ENCODE measurements at regions of chr9 and their contacts with region 1.

Region 1: GRCh38 chr9:136539427-136540421 is 6.1 kb downstream of the NOTCH1 start:
- DNase-seq: peak; percentile 49 to 94 (median 86)
- ATAC-seq: peak; percentile 70
- H3K4me3 ChIP-seq: peak overlapping the region; percentile 30 to 58
- H3K4me3 Mint-ChIP-seq: peak overlapping the region; percentile 85
- H3K27ac ChIP-seq: peak overlapping the region; percentile 73 to 95
- H3K27ac Mint-ChIP-seq: peak overlapping the region; percentile 97
- H3K4me1 ChIP-seq: peaks cover 80% of the 10 kb centered on the region
- H3K4me1 Mint-ChIP-seq: peaks cover 59% of the 10 kb centered on the region
- H3K27me3 ChIP-seq: no peaks in the 10 kb centered on the region
- H3K27me3 Mint-ChIP-seq: no peaks in the 10 kb centered on the region
- CTCF ChIP-seq: no peak

Region 2: DNA sequence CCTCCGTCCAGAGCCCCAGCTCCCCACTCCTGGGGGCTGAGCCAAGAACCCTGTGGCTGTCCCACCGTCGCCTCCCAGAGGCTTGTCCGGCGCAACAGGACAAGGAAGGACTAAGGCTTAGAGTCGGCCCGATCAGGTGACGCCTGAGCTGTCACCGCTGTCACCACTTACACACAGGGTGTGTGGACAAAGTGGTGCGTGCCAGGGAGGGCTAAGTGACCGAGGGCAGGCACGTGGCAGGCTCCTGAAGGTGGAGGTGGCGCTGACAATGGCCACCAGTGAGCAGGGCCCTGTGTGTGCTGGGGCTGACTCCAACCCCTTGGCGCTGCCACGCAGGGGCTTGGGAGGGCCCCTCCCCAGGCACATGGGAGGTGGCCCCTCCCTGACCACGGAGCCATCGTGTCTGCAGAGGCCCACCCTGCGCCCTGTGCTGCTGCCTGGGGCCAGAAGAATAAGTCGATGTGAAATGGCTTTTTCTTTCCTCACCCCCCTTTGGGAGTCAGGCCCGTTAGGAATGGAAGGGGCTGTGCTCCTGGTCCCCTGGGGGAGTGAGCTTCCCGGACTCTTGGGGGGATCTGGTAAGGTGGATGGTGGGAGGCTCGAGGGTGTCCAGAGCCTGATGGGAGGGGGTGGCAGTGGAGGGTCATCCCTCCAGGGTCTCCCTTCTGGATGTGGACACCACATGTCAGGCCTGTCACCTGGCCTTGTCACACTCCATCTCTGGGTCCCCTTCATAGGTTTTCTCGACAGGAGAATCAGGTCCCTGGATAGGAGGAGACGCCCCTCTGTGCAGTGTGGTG is 215.0 kb before region 1 on chr9:
- CTCF ChIA-PET with region 1: no interaction called
- POLR2A ChIA-PET with region 1: no interaction called
- intact Hi-C with region 1: no loop called
- DNase-seq: no peak
- ATAC-seq: no peak
- H3K4me3 ChIP-seq: no peak overlapping the region
- H3K4me3 Mint-ChIP-seq: no peak overlapping the region
- H3K27ac ChIP-seq: no peak overlapping the region
- H3K27ac Mint-ChIP-seq: no peak overlapping the region
- H3K4me1 ChIP-seq: peaks cover 10% of the 10 kb centered on the region
- H3K4me1 Mint-ChIP-seq: peaks cover 4% of the 10 kb centered on the region
- H3K27me3 ChIP-seq: no peaks in the 10 kb centered on the region
- H3K27me3 Mint-ChIP-seq: no peaks in the 10 kb centered on the region
- CTCF ChIP-seq: no peak

Region 3: GRCh38 chr9:136370037-136370436 is 169.7 kb before region 1 on chr9:
- CTCF ChIA-PET with region 1: no interaction called
- POLR2A ChIA-PET with region 1: no interaction called
- intact Hi-C with region 1: no loop called
- DNase-seq: no peak
- ATAC-seq: no peak
- H3K4me3 ChIP-seq: no peak overlapping the region
- H3K4me3 Mint-ChIP-seq: no peak overlapping the region
- H3K27ac ChIP-seq: no peak overlapping the region
- H3K27ac Mint-ChIP-seq: no peak overlapping the region
- H3K4me1 ChIP-seq: no peaks in the 10 kb centered on the region
- H3K4me1 Mint-ChIP-seq: peaks cover 12% of the 10 kb centered on the region
- H3K27me3 ChIP-seq: peaks cover 0 to 3% of the 10 kb centered on the region in 2 experiments
- H3K27me3 Mint-ChIP-seq: no peaks in the 10 kb centered on the region
- CTCF ChIP-seq: no peak

Region 4: GRCh38 chr9:136527721-136528691 is 11.7 kb before region 1 on chr9:
- CTCF ChIA-PET with region 1: interaction called, 4 read pairs
- POLR2A ChIA-PET with region 1: interaction called, 13 read pairs
- intact Hi-C with region 1: no loop called
- DNase-seq: peak in 2 of 9 experiments; percentile 40 to 46
- ATAC-seq: no peak
- H3K4me3 ChIP-seq: no peak overlapping the region
- H3K4me3 Mint-ChIP-seq: no peak overlapping the region
- H3K27ac ChIP-seq: no peak overlapping the region
- H3K27ac Mint-ChIP-seq: peak overlapping the region; percentile 32
- H3K4me1 ChIP-seq: peaks cover 47% of the 10 kb centered on the region
- H3K4me1 Mint-ChIP-seq: peaks cover 23% of the 10 kb centered on the region
- H3K27me3 ChIP-seq: no peaks in the 10 kb centered on the region
- H3K27me3 Mint-ChIP-seq: no peaks in the 10 kb centered on the region
- CTCF ChIP-seq: no peak

Region 5: GRCh38 chr9:136578915-136579649 is 39.4 kb after region 1 on chr9:
- CTCF ChIA-PET with region 1: no interaction called
- POLR2A ChIA-PET with region 1: no interaction called
- intact Hi-C with region 1: no loop called
- DNase-seq: peak in 2 of 9 experiments; percentile 22 to 31
- ATAC-seq: peak; percentile 55
- H3K4me3 ChIP-seq: no peak overlapping the region
- H3K4me3 Mint-ChIP-seq: no peak overlapping the region
- H3K27ac ChIP-seq: no peak overlapping the region
- H3K27ac Mint-ChIP-seq: no peak overlapping the region
- H3K4me1 ChIP-seq: no peaks in the 10 kb centered on the region
- H3K4me1 Mint-ChIP-seq: peaks cover 7% of the 10 kb centered on the region
- H3K27me3 ChIP-seq: no peaks in the 10 kb centered on the region
- H3K27me3 Mint-ChIP-seq: no peaks in the 10 kb centered on the region
- CTCF ChIP-seq: no peak

Measured in CD8-positive, alpha-beta T cell (primary cell).